Natural killer cell (primary cell): ENCODE measurements at regions of chr12 and their contacts with region 1.

Region 1: GRCh38 chr12:103840876-103841689 is at the start of gene NT5DC3:
- DNase-seq: peak; percentile 73 to 90
- ATAC-seq: peak; percentile 93 to 99 (median 95)
- H3K4me3 ChIP-seq: peak within 1 kb of the TSS; percentile 50
- H3K4me3 Mint-ChIP-seq: peak within 1 kb of the TSS; percentile 93
- H3K27ac ChIP-seq: peak within 1 kb of the TSS; percentile 48
- H3K27ac Mint-ChIP-seq: peak within 1 kb of the TSS; percentile 78 to 79
- H3K4me1 ChIP-seq: peaks cover 19% of the 10 kb centered on the region
- H3K4me1 Mint-ChIP-seq: peaks cover 15 to 18% of the 10 kb centered on the region in 2 donors
- H3K27me3 ChIP-seq: no peaks in the 10 kb centered on the region
- H3K27me3 Mint-ChIP-seq: peaks cover 0 to 15% of the 10 kb centered on the region in 2 donors
- CTCF ChIP-seq: no peak
- total RNA-seq, gene NT5DC3: 1.1 to 2.1 (median 1.4) TPM

Region 2: DNA sequence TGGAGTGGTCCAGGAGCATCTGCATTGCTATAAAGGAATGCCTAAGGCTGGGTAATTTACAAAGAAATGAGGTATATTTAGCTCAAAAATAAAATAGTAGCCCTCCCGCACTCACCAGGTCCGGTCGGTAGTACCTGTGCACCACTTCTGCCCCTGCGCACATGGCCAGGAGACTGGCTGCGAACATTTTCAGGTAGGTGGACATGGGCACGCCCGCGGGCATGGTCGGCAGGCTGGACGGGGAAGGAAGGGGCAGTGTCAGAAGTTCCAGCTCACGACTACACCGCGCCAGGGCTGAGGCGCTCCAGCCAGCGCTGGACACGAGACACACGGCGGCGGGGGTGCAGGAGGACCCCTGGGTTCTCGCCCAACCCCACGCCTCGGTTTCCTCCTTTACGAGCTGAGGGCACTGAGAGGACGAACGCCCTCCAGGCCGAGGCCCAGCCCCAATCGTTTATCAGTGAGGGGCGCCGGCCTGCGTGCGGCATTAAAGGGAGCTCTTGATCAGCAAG is 115.5 kb after region 1 on chr12:
- intact Hi-C with region 1: loop called (anchors 5 kb)
- DNase-seq: no peak
- ATAC-seq: peak in 1 of 3 donors; percentile 8
- H3K4me3 ChIP-seq: peak overlapping the region; percentile 53
- H3K4me3 Mint-ChIP-seq: peak overlapping the region; percentile 99
- H3K27ac ChIP-seq: peak overlapping the region; percentile 91
- H3K27ac Mint-ChIP-seq: peak overlapping the region; percentile 96 to 99
- H3K4me1 ChIP-seq: peaks cover 19% of the 10 kb centered on the region
- H3K4me1 Mint-ChIP-seq: peaks cover 31 to 42% of the 10 kb centered on the region in 2 donors
- H3K27me3 ChIP-seq: no peaks in the 10 kb centered on the region
- H3K27me3 Mint-ChIP-seq: no peaks in the 10 kb centered on the region
- CTCF ChIP-seq: no peak